ENCODE measurements at regions of chr11 and their contacts with region 1.

Region 1: GRCh38 chr11:124976994-124977393 is 23.0 kb downstream of the CCDC15 start:
- H3K4me3 Mint-ChIP-seq: no peak overlapping the region
- H3K27ac Mint-ChIP-seq: no peak overlapping the region
- H3K4me1 Mint-ChIP-seq: no peaks in the 10 kb centered on the region
- H3K27me3 Mint-ChIP-seq: no peaks in the 10 kb centered on the region

Region 2: DNA sequence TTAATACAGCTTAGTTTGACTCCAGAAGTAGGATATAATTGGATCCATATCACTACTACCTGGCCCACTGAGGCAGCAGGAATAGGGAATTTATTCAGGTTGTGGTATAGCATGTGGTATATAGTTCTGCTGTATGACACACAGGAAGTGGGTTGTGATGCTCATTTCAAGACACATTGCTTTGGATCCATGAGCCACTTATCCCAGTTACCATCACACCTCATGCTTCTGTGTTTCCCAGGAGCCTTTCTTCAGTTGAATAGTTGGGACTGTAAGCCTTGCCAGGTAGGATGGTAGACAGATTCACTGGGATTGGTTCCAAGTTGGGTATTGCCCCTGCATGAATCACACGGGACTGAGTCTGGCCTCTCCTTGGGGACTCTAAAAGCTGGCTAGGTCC is 76.2 kb after region 1 on chr11:
- intact Hi-C with region 1: loop called (anchors 5 kb)
- H3K4me3 Mint-ChIP-seq: no peak overlapping the region
- H3K27ac Mint-ChIP-seq: no peak overlapping the region
- H3K4me1 Mint-ChIP-seq: peaks cover under 1% of the 10 kb centered on the region
- H3K27me3 Mint-ChIP-seq: no peaks in the 10 kb centered on the region

Measured in dendritic cell treated with granulocyte-macrophage colony-stimulating factor and Interleukin-4, amounts not matched to agents 40 ng/mL and 50 ng/mL, for 4 days (primary cell).